A549 (cell line): ENCODE measurements at regions of chr14 and their contacts with region 1.

Region 1: GRCh38 chr14:24678801-24679247 is 44.8 kb upstream of the GZMB start:
- DNase-seq: peak; percentile 60 to 89
- ATAC-seq: peak; percentile 97 to 100
- H3K4me3 ChIP-seq: no peak overlapping the region
- H3K27ac ChIP-seq: no peak overlapping the region
- H3K4me1 ChIP-seq: no peaks in the 10 kb centered on the region
- CTCF ChIP-seq: peak; percentile 98
- EP300 ChIP-seq: no peak
- POLR2A ChIP-seq: no peak
- RAD21 ChIP-seq: peak; percentile 50 to 57

Region 2: GRCh38 chr14:24690492-24690891 is 11.7 kb after region 1 on chr14:
- CTCF ChIA-PET with region 1: interaction called, 14 read pairs
- POLR2A ChIA-PET with region 1: no interaction called
- DNase-seq: no peak
- ATAC-seq: peak; percentile 50 to 56; a peak in 1 of 6 replicates
- H3K4me3 ChIP-seq: no peak overlapping the region
- H3K27ac ChIP-seq: no peak overlapping the region
- H3K4me1 ChIP-seq: no peaks in the 10 kb centered on the region
- CTCF ChIP-seq: no peak
- EP300 ChIP-seq: no peak
- POLR2A ChIP-seq: no peak
- RAD21 ChIP-seq: no peak

Region 3: DNA sequence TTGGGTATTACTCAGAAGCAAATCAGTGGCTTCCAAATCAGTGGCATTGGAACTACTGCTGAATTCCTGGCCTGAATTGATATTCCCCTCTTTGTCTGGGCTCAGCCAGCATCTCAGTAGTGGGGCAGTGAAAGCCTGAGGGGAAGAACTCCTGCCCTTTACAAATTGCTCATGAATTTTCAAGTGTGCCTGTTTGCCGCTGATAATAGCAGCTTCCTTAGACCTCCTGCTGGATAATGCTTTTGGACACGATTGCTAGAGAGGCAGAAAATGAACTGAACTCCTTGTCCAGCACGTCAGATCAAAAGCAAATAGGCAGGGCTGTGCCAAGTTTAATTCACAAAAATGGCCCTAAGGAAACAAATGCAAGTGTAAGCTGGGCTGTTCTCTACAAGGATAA is 46.5 kb after region 1 on chr14:
- CTCF ChIA-PET with region 1: no interaction called
- POLR2A ChIA-PET with region 1: no interaction called
- DNase-seq: no peak
- ATAC-seq: no peak
- H3K4me3 ChIP-seq: no peak overlapping the region
- H3K27ac ChIP-seq: no peak overlapping the region
- H3K4me1 ChIP-seq: no peaks in the 10 kb centered on the region
- CTCF ChIP-seq: no peak
- EP300 ChIP-seq: no peak
- POLR2A ChIP-seq: no peak
- RAD21 ChIP-seq: no peak